ENCODE measurements at regions of chr4 and their contacts with region 1.

Region 1: GRCh38 chr4:107689912-107690565 is 30.0 kb downstream of the PAPSS1 start:
- DNase-seq: no peak
- ATAC-seq: no peak

Region 2: DNA sequence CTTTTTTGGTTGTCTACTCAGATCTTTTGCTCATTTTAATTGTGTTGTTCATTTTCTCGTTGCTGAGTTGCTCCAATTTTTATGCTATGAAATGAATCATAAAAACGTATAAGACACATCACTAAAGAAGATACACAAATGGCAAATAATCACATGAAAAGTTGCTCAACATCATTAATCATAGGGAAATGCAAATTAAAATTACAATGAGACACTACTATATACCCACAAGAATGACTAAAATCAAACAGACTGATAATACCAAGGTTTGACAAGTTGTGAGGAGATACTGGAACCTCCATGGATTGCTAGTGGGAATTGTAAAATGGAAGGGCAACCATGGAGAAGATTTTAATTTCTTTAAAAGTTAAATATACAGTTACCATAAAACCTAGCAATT is 1964.4 kb before region 1 on chr4:
- intact Hi-C with region 1: loop called (anchors 10 kb)
- DNase-seq: no peak
- ATAC-seq: no peak

Region 3: DNA sequence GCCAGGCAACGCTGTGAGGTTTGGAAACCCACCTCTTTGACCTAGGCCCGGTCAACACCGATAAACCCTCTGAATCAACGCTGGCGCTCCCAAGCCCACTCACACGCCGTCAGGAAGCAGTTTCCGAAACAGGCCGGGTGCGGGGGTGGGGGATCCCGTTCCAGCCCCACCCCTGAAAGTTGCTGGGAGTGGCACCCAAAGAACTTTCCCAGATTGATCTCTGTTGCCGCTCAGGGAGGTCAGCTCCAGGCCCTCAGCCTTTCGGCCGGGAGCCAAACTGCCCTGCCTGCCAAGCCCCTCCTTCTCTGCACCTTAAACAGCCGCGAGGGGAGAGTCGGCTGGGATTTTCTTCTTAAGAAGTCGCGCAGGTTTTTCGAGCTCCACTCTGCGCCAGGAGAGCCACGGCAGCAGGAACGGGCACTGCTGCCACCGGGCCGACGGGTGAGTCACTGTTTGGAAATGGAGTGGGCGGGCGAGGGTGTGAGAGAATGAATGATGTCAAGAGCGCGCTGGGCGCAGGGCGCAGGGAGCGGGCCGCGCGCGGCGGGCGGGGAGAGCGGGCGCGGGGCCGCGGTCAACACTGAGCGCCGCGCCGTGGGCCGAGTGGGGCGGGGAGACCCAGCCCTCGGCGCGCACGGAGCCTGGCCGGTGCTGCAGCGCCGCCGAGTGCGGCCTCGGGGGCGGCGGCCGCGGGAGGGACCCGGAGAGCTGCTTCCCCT is 134.5 kb after region 1 on chr4 and contains the start of gene SGMS2:
- intact Hi-C with region 1: no loop called
- DNase-seq: peak; percentile 91
- ATAC-seq: peak; percentile 91
- total RNA-seq, gene SGMS2: 43.6 TPM